Vagina (tissue), 2 donors: ENCODE measurements at regions of chr12 and their contacts with region 1.

Region 1: DNA sequence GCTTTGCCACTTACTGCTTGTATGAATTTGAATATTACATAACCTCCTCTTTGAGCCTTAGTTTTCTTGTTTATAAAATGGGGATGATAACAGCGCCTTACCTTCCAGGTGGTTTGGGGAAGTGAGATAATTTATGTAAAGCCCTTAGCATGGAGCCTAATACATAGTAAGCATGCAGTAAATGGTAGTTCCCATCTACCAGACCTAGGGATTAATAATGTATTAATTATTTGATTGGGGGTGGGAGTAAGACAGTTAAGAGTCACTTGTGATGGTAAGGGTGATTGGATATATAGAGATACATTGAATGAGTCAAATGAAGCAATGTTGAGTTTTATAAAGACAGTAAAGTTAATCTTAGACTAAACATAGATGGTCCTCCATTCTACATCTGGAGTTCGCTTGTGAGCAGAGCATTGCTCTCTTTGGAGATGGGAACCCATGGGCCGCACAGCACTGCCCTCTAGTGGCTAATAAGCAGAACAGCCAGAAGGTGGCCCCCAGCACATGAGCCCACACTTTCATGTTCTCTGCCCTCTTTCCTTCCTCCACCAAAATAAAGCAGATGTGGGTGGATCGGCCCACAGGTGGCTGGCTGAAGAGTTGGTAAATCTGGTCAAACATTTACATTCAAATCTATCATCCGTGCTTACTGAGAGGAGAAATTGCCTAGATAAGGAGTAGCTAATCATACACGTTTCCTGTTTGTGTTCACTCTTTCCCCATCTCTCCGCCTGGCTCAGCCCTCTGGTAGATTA is 26.5 kb upstream of the TAMALIN start:
- DNase-seq: no peak
- H3K4me3 ChIP-seq: no peak overlapping the region
- H3K27ac ChIP-seq: no peak overlapping the region
- H3K4me1 ChIP-seq: no peaks in the 10 kb centered on the region
- H3K27me3 ChIP-seq: no peaks in the 10 kb centered on the region
- CTCF ChIP-seq: peak; percentile 88 to 98 (median 95)
- POLR2A ChIP-seq: no peak

Region 2: GRCh38 chr12:51891843-51892242 is 88.4 kb before region 1 on chr12:
- intact Hi-C with region 1: loop called (anchors 5 kb)
- DNase-seq: no peak
- H3K4me3 ChIP-seq: no peak overlapping the region
- H3K27ac ChIP-seq: no peak overlapping the region
- H3K4me1 ChIP-seq: peaks cover 11% of the 10 kb centered on the region
- H3K27me3 ChIP-seq: no peaks in the 10 kb centered on the region
- CTCF ChIP-seq: no peak
- POLR2A ChIP-seq: no peak

Region 3: DNA sequence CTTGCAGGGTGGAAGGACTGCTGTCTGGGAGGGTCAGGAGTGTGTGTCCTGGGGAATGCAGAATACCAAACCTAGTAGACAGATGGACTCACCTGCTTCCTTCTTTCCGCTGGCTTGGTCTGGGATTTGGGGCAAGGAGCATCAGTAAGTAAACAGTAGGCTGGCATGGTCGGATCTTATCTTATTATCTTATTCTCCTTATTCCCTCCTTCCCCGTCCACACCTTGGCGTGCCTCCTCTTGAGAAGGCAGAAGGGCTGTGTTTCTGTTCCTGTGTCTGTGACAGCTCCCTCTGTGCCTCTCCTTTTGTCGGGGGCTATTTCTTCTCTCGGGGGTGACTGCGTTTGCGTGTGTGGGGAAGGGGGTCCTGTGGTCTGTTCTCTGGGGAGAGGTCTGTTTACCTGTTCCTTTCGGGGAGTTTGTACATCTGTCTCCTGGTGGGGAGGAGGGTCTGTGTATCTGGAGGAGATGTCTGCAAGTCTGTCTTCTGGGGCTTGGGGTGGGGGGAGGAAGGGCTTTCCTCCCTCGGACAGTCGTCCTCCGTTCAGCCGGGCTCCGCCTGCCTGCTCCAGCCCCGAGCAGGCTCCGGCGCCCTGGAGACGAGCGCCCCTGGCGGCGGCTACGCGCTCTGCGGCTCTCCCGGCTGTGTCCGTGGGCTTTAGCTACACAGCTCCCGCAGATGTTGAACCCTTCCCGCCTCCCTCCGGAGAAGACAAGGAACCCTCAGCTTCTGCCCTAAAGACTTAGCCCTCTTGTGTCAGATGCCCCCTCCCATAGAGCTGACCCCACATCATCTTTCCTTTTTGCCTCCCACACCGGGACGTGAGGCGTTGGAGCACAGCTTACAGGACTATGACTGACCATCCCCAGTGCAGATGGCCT is 298.6 kb after region 1 on chr12:
- intact Hi-C with region 1: no loop called
- DNase-seq: peak; percentile 88 to 93
- H3K4me3 ChIP-seq: peak overlapping the region; percentile 11 to 33
- H3K27ac ChIP-seq: peak overlapping the region; percentile 90
- H3K4me1 ChIP-seq: peaks cover 38% of the 10 kb centered on the region
- H3K27me3 ChIP-seq: no peaks in the 10 kb centered on the region
- CTCF ChIP-seq: peak; percentile 69 to 92 (median 90)
- POLR2A ChIP-seq: no peak